ENCODE measurements at regions of chr12 and their contacts with region 1.

Region 1: DNA sequence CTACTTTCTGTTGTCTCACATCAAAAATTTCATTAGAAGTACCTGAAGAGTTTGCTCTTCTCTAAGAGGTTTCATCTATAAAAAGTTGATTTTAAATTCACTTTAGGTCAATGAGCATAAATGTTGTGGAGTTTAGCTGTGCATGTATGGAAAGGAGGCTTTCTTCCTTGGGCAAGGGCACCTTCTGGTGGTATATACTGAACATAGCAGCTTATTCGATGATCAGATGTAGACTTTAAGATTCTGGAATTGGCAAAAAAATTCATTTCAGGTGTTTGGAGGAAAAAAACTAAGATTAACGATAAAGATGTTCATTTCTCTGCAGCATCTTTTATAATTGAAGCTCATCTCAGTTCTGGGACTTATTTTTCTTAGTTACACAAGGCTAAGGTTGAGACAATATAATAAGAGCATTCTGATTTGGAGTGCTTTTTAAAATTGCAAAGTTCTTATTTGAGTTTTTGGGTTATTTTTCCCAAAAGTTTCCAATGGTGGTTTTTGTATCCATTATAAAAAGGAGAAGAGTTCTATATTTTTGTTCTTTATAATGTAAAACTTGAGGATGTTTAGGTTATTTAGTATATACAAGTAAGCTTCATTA is 46.8 kb downstream of the TMEM117 start:
- DNase-seq: peak; percentile 12 to 53 (median 28)
- H3K4me3 ChIP-seq: no peak overlapping the region
- H3K4me3 Mint-ChIP-seq: no peak overlapping the region
- H3K27ac ChIP-seq: no peak overlapping the region
- H3K27ac Mint-ChIP-seq: no peak overlapping the region
- H3K4me1 ChIP-seq: no peaks in the 10 kb centered on the region
- H3K4me1 Mint-ChIP-seq: no peaks in the 10 kb centered on the region
- H3K27me3 ChIP-seq: no peaks in the 10 kb centered on the region
- H3K27me3 Mint-ChIP-seq: peaks cover 0 to 3% (median 1%) of the 10 kb centered on the region in 3 donors
- CTCF ChIP-seq: peak; percentile 78

Region 2: DNA sequence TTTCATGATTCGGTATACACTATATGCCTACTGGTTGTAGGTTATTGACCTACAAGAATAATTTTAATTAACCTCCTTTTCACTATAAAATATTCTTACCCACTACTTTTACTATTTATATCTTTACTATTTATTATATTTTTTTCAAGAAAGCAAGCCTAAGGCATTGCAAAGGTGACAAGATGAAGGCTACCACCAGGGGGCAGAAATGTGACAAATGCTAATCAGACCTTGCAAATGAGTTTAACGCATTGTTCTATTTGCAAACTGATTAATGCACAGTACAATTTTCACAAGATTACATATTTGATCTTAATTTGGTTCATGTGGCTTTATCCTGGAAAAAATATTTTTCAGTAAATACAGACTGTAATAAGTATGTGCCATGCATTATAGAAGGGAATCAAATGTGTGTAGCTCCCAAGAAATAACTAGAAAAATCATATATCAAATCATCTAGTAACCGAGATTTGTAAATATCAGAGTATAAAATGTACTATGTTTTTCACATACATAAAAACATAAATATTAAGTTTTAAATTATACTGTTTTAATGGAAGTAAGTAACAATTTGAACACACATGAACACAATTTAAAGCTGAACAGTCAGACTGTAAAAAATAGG is 437.6 kb before region 1 on chr12:
- intact Hi-C with region 1: loop called (anchors 10 kb)
- DNase-seq: peak in 2 of 3 donors; percentile 0 to 5
- H3K4me3 ChIP-seq: no peak overlapping the region
- H3K4me3 Mint-ChIP-seq: no peak overlapping the region
- H3K27ac ChIP-seq: no peak overlapping the region
- H3K27ac Mint-ChIP-seq: no peak overlapping the region
- H3K4me1 ChIP-seq: no peaks in the 10 kb centered on the region
- H3K4me1 Mint-ChIP-seq: no peaks in the 10 kb centered on the region
- H3K27me3 ChIP-seq: no peaks in the 10 kb centered on the region
- H3K27me3 Mint-ChIP-seq: peaks cover 2% of the 10 kb centered on the region in 3 donors
- CTCF ChIP-seq: peak; percentile 77

Region 3: GRCh38 chr12:43621262-43621661 is 261.4 kb before region 1 on chr12:
- intact Hi-C with region 1: no loop called
- DNase-seq: no peak
- H3K4me3 ChIP-seq: no peak overlapping the region
- H3K4me3 Mint-ChIP-seq: no peak overlapping the region
- H3K27ac ChIP-seq: no peak overlapping the region
- H3K27ac Mint-ChIP-seq: no peak overlapping the region
- H3K4me1 ChIP-seq: no peaks in the 10 kb centered on the region
- H3K4me1 Mint-ChIP-seq: no peaks in the 10 kb centered on the region
- H3K27me3 ChIP-seq: no peaks in the 10 kb centered on the region
- H3K27me3 Mint-ChIP-seq: no peaks in the 10 kb centered on the region
- CTCF ChIP-seq: no peak

Region 4: GRCh38 chr12:43776498-43776897 is 106.2 kb before region 1 on chr12:
- intact Hi-C with region 1: loop called in 1 of 2 experiments (anchors 5 kb)
- DNase-seq: peak in 1 of 3 donors; percentile 4
- H3K4me3 ChIP-seq: no peak overlapping the region
- H3K4me3 Mint-ChIP-seq: no peak overlapping the region
- H3K27ac ChIP-seq: no peak overlapping the region
- H3K27ac Mint-ChIP-seq: no peak overlapping the region
- H3K4me1 ChIP-seq: no peaks in the 10 kb centered on the region
- H3K4me1 Mint-ChIP-seq: no peaks in the 10 kb centered on the region
- H3K27me3 ChIP-seq: no peaks in the 10 kb centered on the region
- H3K27me3 Mint-ChIP-seq: no peaks in the 10 kb centered on the region
- CTCF ChIP-seq: peak; percentile 38

Region 5: DNA sequence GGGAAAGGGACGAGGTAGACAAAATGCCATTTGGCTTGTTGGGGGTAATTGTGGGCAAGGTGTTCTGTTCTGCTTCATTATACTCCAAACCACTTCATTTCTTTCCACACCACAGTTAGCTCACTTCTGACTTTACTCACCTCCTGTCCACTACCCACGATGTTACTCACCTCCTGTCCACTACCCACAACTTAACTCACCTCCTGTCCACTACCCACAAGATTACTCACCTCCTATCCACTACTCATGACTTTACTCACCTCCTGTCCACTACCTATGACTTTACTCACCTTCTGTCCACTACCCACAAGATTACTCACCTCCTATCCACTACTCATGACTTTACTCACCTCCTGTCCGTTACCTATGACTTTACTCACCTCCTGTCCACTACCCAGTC is 66.5 kb before region 1 on chr12:
- intact Hi-C with region 1: no loop called
- DNase-seq: no peak
- H3K4me3 ChIP-seq: no peak overlapping the region
- H3K4me3 Mint-ChIP-seq: no peak overlapping the region
- H3K27ac ChIP-seq: no peak overlapping the region
- H3K27ac Mint-ChIP-seq: peak overlapping the region in 1 of 7 donors; percentile 1
- H3K4me1 ChIP-seq: no peaks in the 10 kb centered on the region
- H3K4me1 Mint-ChIP-seq: no peaks in the 10 kb centered on the region
- H3K27me3 ChIP-seq: peaks cover 3 to 4% of the 10 kb centered on the region in 2 donors
- H3K27me3 Mint-ChIP-seq: peaks cover 10 to 24% (median 24%) of the 10 kb centered on the region in 3 donors
- CTCF ChIP-seq: no peak